Activated naive CD4-positive, alpha-beta T cell treated with anti-CD3 and anti-CD28 coated beads for 36 hours (primary cell): ENCODE measurements at regions of chr3 and their contacts with region 1.

Region 1: GRCh38 chr3:6516694-6517093 is 344.2 kb upstream of the GRM7 start:
- DNase-seq: no peak
- H3K4me3 Mint-ChIP-seq: no peak overlapping the region
- H3K27ac Mint-ChIP-seq: no peak overlapping the region
- H3K4me1 Mint-ChIP-seq: no peaks in the 10 kb centered on the region
- H3K27me3 Mint-ChIP-seq: no peaks in the 10 kb centered on the region

Region 2: DNA sequence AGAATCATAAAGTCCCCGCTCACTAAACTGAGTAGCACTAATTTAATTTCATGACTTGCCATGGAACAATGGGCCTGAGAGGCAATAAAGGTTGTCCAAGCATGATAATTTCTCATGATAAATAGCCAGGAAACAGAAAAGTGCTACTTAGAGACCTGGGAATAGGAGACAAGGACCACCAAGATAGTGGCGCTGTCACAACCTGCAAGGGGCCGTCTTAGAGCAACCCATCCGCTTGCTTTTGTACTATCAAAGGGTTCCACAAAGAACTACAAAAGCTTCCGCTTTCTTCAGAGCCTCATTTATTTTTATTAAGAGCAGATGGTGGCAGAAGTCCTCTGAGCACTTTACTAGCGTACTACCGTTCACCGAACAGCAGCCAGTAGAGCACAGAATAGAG is 77.5 kb before region 1 on chr3:
- CTCF ChIA-PET with region 1: no interaction called
- intact Hi-C with region 1: no loop called
- DNase-seq: no peak
- H3K4me3 Mint-ChIP-seq: no peak overlapping the region
- H3K27ac Mint-ChIP-seq: no peak overlapping the region
- H3K4me1 Mint-ChIP-seq: no peaks in the 10 kb centered on the region
- H3K27me3 Mint-ChIP-seq: no peaks in the 10 kb centered on the region

Region 3: GRCh38 chr3:6528951-6529350 is 12.3 kb after region 1 on chr3:
- CTCF ChIA-PET with region 1: no interaction called
- intact Hi-C with region 1: loop called (anchors 1 kb)
- DNase-seq: no peak
- H3K4me3 Mint-ChIP-seq: no peak overlapping the region
- H3K27ac Mint-ChIP-seq: no peak overlapping the region
- H3K4me1 Mint-ChIP-seq: no peaks in the 10 kb centered on the region
- H3K27me3 Mint-ChIP-seq: no peaks in the 10 kb centered on the region